Heart right ventricle (tissue), 16 donors: ENCODE measurements at regions of chr19 and their contacts with region 1.

Region 1: DNA sequence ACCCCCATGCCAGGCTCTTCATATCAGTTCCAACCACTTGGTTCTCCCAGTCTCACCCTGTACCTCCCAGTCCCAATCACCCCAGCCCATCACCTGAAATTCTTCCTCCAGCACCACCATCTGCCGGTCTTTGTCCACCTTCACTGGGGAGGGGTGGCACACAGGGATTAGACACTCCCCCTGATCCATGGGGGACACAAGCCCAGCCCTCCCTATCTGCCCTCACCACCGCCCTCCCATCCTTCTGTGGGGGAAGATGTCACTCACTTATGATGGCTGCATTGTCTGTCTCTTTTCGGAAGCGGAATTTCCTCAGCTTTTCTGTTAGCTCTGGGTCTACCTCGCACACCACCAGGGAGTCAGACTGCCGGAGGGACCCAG is 685 bp downstream of the GMFG start:
- DNase-seq: no peak
- ATAC-seq: peak in 5 of 8 donors; percentile 8 to 47 (median 29)
- H3K4me3 ChIP-seq: peak overlapping the region in 9 of 10 donors; percentile 22 to 73 (median 50)
- H3K27ac ChIP-seq: peak overlapping the region in 9 of 10 donors; percentile 42 to 99 (median 68)
- H3K4me1 ChIP-seq: peaks cover 0 to 48% (median under 1%) of the 10 kb centered on the region in 9 donors
- H3K27me3 ChIP-seq: no peaks in the 10 kb centered on the region
- CTCF ChIP-seq: no peak

Region 2: GRCh38 chr19:38975214-38975860 is 359.8 kb before region 1 on chr19 and contains the start of gene FBXO17:
- intact Hi-C with region 1: loop called in 1 of 10 experiments (anchors 10 kb)
- DNase-seq: peak; percentile 26 to 61
- ATAC-seq: peak; percentile 64 to 89 (median 82)
- H3K4me3 ChIP-seq: peak within 1 kb of the TSS; percentile 38 to 73 (median 60)
- H3K27ac ChIP-seq: peak within 1 kb of the TSS; percentile 4 to 87 (median 78)
- H3K4me1 ChIP-seq: peaks cover 0 to 17% (median 5%) of the 10 kb centered on the region in 9 donors
- H3K27me3 ChIP-seq: peaks cover 0 to 29% (median 20%) of the 10 kb centered on the region in 7 donors
- CTCF ChIP-seq: no peak
- total RNA-seq, gene FBXO17: 1.00 to 2.8 (median 1.7) TPM